ENCODE measurements at regions of chr5 and their contacts with region 1.

Region 1: DNA sequence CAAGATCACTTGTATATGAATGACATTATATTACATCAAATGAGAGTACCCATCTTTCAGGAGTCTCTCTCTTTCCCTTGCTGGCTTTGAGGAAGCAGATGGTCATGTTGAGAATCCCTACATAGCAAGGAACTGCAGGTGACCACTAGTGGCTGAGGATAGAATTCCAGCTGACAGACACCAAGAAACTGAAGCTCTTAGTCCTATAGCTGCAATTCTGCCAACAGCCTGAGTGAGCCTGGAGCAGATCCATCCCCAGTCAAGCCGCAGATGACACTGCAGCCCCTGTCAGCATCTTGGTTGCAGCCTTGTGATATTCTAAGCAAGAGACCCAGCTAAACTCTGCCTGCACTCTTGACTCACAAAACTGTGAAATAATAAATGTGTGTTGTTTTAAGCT is 531.5 kb downstream of the CSNK1G3 start:
- DNase-seq: peak in 1 of 2 experiments; percentile 17
- H3K4me3 ChIP-seq: no peak overlapping the region
- H3K27ac ChIP-seq: no peak overlapping the region
- H3K4me1 ChIP-seq: no peaks in the 10 kb centered on the region
- H3K27me3 ChIP-seq: no peaks in the 10 kb centered on the region
- CTCF ChIP-seq: peak in 2 of 3 experiments; percentile 37 to 59; a peak in 2 of 4 replicates
- EP300 ChIP-seq: no peak
- POLR2A ChIP-seq: no peak
- RAD21 ChIP-seq: peak; percentile 36 to 39; a peak in 2 of 4 replicates

Region 2: GRCh38 chr5:124021066-124021641 is 22.3 kb before region 1 on chr5:
- CTCF ChIA-PET with region 1: interaction called, 11 read pairs
- POLR2A ChIA-PET with region 1: no interaction called
- DNase-seq: no peak
- H3K4me3 ChIP-seq: no peak overlapping the region
- H3K27ac ChIP-seq: no peak overlapping the region
- H3K4me1 ChIP-seq: peaks cover 0 to 5% (median 0%) of the 10 kb centered on the region in 4 experiments; a peak in 2 of 7 replicates
- H3K27me3 ChIP-seq: no peaks in the 10 kb centered on the region
- CTCF ChIP-seq: no peak
- EP300 ChIP-seq: no peak
- POLR2A ChIP-seq: no peak
- RAD21 ChIP-seq: no peak

Measured in H1 (cell line).